Calu3 (cell line): ENCODE measurements at regions of chr3 and their contacts with region 1.

Region 1: GRCh38 chr3:124761250-124761796 is 31.1 kb downstream of the UMPS start:
- DNase-seq: peak; percentile 84
- H3K4me3 Mint-ChIP-seq: no peak overlapping the region
- H3K27ac Mint-ChIP-seq: no peak overlapping the region
- H3K4me1 Mint-ChIP-seq: peaks cover 10% of the 10 kb centered on the region
- H3K27me3 Mint-ChIP-seq: no peaks in the 10 kb centered on the region
- CTCF ChIP-seq: peak; percentile 96

Region 2: GRCh38 chr3:124905849-124906248 is 144.5 kb after region 1 on chr3:
- CTCF ChIA-PET with region 1: interaction called, 43 read pairs
- intact Hi-C with region 1: loop called (anchors 1 kb)
- DNase-seq: no peak
- H3K4me3 Mint-ChIP-seq: no peak overlapping the region
- H3K27ac Mint-ChIP-seq: no peak overlapping the region
- H3K4me1 Mint-ChIP-seq: peaks cover 9% of the 10 kb centered on the region
- H3K27me3 Mint-ChIP-seq: no peaks in the 10 kb centered on the region
- CTCF ChIP-seq: no peak

Region 3: DNA sequence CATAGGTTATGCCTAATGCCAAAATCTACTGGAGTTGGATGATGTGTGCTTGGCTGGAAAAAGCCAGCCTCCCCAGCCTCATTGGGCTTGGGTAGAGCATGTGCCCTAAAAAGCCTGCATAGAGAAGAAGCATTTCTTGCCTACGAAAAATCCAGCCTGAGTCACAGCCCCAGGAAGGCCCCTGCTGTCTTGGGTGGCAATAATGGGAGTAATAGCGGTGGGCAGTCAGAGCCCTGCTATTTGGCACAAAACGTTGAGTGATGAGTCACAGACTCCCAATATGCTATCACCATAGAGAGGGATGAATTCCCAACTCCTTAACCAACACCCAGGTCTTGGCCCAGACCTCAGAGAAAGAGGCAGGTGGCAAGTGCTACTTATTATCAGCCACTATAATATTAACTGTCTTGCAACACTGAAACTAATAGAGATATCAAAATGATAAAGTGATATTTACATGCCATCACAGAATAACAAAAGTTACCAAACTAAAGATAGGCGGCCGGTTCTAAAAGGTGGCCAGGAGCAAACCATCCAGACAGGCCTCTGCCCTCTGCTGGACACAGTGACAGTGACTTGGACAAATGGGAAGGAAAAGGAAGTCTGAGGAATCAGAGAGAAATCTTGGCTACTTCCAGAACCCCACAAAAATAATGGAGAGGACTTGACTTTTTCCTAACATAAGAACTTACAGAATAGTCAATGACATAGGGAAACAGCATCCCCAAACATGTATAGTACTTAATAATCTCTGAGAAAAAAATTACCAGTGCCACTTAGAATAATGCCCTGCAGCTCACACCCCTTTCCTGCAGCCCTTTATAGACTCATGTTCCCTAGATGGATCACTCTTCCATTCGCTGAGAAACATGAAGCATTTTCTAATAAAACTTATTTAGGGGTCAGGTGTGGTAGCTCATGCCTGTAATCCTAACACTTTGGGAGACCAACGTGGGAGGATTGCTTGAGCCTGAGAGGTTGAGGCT is 225.1 kb after region 1 on chr3:
- CTCF ChIA-PET with region 1: interaction called, 4 read pairs
- intact Hi-C with region 1: loop called (anchors 2 kb)
- DNase-seq: peak; percentile 54
- H3K4me3 Mint-ChIP-seq: no peak overlapping the region
- H3K27ac Mint-ChIP-seq: no peak overlapping the region
- H3K4me1 Mint-ChIP-seq: peaks cover 9% of the 10 kb centered on the region
- H3K27me3 Mint-ChIP-seq: peaks cover 16% of the 10 kb centered on the region
- CTCF ChIP-seq: peak; percentile 43